ENCODE measurements at regions of chr9 and their contacts with region 1.

Region 1: GRCh38 chr9:114681594-114682332 is at the start of gene TEX48:
- DNase-seq: peak; percentile 73
- H3K4me3 ChIP-seq: no peak within 1 kb of the TSS
- H3K27ac ChIP-seq: no peak within 1 kb of the TSS
- H3K4me1 ChIP-seq: peaks cover 33% of the 10 kb centered on the region
- H3K27me3 ChIP-seq: no peaks in the 10 kb centered on the region
- CTCF ChIP-seq: peak; percentile 84 to 95
- total RNA-seq, gene TEX48: not detected

Region 2: DNA sequence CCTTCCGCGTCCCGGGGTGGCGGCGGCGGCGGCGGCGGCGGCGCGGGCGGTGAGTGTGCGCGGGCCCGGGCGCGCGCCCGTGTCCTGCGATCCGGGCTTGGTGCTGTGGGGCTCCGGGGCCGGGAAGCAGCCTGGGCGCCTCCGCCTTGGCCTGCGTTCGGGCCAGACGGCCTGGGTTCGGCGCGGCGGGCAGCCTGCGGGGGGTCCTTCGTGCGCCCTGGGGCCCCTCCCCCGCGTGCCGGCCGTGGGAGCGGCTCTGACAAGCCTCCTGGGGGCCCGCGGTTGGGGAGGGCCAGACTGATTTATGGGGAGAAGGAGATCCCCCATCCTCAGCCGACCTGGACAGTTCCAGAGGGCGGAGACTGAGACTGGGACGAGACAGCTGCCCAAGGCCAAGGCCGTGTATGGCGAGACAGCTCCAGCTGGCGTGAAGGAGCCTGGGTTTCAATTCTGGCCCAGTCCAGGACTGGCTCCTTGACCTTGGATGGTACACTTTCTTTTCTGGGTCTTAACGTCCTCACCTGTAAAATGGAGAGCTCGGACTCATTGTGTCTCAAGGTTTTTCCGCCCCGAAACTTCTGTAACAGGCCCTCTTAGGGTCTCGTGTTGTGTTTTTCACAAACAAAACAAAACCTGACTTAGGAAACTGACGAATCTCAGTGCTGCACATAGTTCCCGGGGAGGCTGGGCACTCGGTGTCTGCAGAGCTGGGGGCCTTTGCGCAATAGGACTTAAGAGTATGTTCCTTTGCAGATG is 70.1 kb before region 1 on chr9:
- CTCF ChIA-PET with region 1: no interaction called
- dilution Hi-C with region 1: no loop called
- in situ Hi-C with region 1: no loop called
- intact Hi-C with region 1: no loop called
- DNase-seq: peak; percentile 46
- H3K4me3 ChIP-seq: peak overlapping the region; percentile 20 to 50 (median 50)
- H3K27ac ChIP-seq: peak overlapping the region; percentile 26
- H3K4me1 ChIP-seq: peaks cover 9% of the 10 kb centered on the region
- H3K27me3 ChIP-seq: no peaks in the 10 kb centered on the region
- CTCF ChIP-seq: no peak

Region 3: GRCh38 chr9:114718801-114719221 is 37.0 kb after region 1 on chr9:
- CTCF ChIA-PET with region 1: no interaction called
- dilution Hi-C with region 1: no loop called
- in situ Hi-C with region 1: no loop called
- intact Hi-C with region 1: loop called (anchors 1 kb)
- DNase-seq: peak; percentile 97
- H3K4me3 ChIP-seq: no peak overlapping the region
- H3K27ac ChIP-seq: peak overlapping the region; percentile 53
- H3K4me1 ChIP-seq: peaks cover 46% of the 10 kb centered on the region
- H3K27me3 ChIP-seq: no peaks in the 10 kb centered on the region
- CTCF ChIP-seq: peak in 1 of 2 donors; percentile 38

Region 4: DNA sequence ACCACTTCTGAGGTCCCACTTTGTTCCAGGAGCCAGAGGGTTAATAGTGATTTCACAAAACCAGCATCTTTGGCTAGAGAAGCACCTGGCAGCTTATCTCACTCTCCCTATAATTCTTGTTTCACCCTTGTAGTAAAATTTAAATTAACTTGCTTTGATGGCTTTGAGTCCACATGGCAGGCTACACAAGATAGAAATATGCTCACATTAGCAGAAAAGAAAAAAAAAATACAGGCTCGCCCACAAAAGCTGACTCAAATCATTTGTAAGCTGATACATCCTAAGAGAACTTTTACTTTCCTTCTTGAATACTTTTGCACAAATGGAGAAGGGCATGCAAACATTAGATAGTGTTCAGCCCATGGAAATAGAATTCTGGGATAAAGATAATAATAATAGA is 87.9 kb after region 1 on chr9:
- CTCF ChIA-PET with region 1: no interaction called
- dilution Hi-C with region 1: loop called (anchors 5 kb)
- in situ Hi-C with region 1: no loop called
- intact Hi-C with region 1: no loop called
- DNase-seq: peak; percentile 14
- H3K4me3 ChIP-seq: no peak overlapping the region
- H3K27ac ChIP-seq: no peak overlapping the region
- H3K4me1 ChIP-seq: peaks cover 11% of the 10 kb centered on the region
- H3K27me3 ChIP-seq: no peaks in the 10 kb centered on the region
- CTCF ChIP-seq: no peak

Region 5: DNA sequence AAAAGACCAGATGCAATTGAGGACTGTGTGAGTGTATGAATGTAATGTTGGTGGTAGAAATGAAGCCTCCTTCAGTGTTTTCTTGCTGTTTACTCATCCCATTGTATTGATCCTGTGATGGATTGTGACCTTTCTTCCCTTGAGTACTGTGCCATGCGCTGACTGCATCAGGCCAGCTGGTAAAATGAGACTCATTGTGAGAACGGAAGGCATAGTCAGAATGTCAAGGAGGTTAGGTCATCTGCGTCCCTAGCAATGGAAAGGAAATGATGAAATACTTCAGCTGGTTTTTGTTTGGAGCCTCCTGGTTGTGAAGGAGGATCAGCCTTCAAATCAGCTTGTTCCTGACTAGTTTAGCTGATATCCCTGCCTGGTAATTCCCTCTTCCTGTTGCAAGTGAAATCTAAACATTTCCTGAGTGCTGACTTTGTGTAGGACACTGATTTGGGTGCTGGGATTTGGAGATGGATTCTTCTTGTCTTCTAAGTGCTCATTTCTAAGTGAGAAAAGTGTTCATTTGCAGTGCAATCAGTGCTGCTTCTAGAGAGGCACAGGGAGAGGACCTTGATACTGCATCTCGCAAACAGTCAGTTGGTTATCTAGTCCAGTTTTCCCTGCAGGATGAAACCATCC is 213.2 kb after region 1 on chr9:
- CTCF ChIA-PET with region 1: no interaction called
- dilution Hi-C with region 1: loop called (anchors 5 kb)
- in situ Hi-C with region 1: no loop called
- intact Hi-C with region 1: no loop called
- DNase-seq: peak; percentile 88
- H3K4me3 ChIP-seq: no peak overlapping the region
- H3K27ac ChIP-seq: peak overlapping the region; percentile 68
- H3K4me1 ChIP-seq: peaks cover 31% of the 10 kb centered on the region
- H3K27me3 ChIP-seq: no peaks in the 10 kb centered on the region
- CTCF ChIP-seq: no peak

Region 6: GRCh38 chr9:115013998-115014397 is 332.2 kb after region 1 on chr9:
- CTCF ChIA-PET with region 1: interaction called, 3 read pairs
- dilution Hi-C with region 1: no loop called
- in situ Hi-C with region 1: loop called in 1 of 2 experiments (anchors 5 kb)
- intact Hi-C with region 1: loop called (anchors 1 kb)
- DNase-seq: peak; percentile 57
- H3K4me3 ChIP-seq: no peak overlapping the region
- H3K27ac ChIP-seq: no peak overlapping the region
- H3K4me1 ChIP-seq: peaks cover under 1% of the 10 kb centered on the region
- H3K27me3 ChIP-seq: no peaks in the 10 kb centered on the region
- CTCF ChIP-seq: peak; percentile 74 to 83

Region 7: DNA sequence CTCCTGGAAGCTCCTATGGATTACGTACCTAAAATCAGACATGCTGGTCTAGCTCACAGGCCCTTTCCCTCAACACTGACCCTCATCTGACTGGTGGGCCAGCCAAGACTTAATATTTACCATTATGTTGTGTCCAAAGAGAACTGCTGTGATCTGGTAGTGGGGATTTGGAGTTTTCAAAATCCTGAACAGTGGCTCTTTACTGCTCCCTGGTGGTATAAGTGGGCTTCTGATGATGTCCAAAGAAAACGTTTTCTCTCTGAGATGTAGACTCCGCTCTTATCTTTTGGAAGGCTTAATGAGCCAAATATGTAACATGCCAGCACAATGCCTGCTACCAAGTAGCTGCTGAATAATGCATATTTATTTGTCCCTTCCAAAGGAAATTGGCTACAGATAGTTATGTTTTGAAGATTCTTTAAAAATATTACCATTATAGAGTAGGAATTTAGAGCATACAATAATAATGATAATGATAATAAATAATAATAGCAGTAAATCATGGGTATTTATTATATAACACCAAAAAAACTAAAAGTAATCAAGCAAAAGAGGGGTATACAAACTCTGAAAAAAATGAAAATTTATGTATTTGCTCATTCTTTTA is 842.8 kb after region 1 on chr9:
- CTCF ChIA-PET with region 1: no interaction called
- dilution Hi-C with region 1: no loop called
- in situ Hi-C with region 1: no loop called
- intact Hi-C with region 1: loop called (anchors 1 kb)
- DNase-seq: peak; percentile 60
- H3K4me3 ChIP-seq: no peak overlapping the region
- H3K27ac ChIP-seq: no peak overlapping the region
- H3K4me1 ChIP-seq: no peaks in the 10 kb centered on the region
- H3K27me3 ChIP-seq: no peaks in the 10 kb centered on the region
- CTCF ChIP-seq: peak; percentile 69 to 80

Measured in mammary epithelial cell (primary cell).